ENCODE measurements at regions of chr2 and their contacts with region 1.

Region 1: GRCh38 chr2:29309090-29310029 is 194.1 kb downstream of the CLIP4 start:
- DNase-seq: peak; percentile 32
- H3K4me3 ChIP-seq: no peak overlapping the region
- H3K27ac ChIP-seq: no peak overlapping the region
- H3K4me1 ChIP-seq: no peaks in the 10 kb centered on the region
- H3K27me3 ChIP-seq: peaks cover 4% of the 10 kb centered on the region
- CTCF ChIP-seq: peak; percentile 70

Region 2: GRCh38 chr2:29841386-29842004 is 532.1 kb after region 1 on chr2:
- intact Hi-C with region 1: loop called (anchors 5 kb)
- DNase-seq: no peak
- H3K4me3 ChIP-seq: no peak overlapping the region
- H3K27ac ChIP-seq: no peak overlapping the region
- H3K4me1 ChIP-seq: no peaks in the 10 kb centered on the region
- H3K27me3 ChIP-seq: no peaks in the 10 kb centered on the region
- CTCF ChIP-seq: peak; percentile 82